B cell (primary cell): ENCODE measurements at regions of chr7 and their contacts with region 1.

Region 1: DNA sequence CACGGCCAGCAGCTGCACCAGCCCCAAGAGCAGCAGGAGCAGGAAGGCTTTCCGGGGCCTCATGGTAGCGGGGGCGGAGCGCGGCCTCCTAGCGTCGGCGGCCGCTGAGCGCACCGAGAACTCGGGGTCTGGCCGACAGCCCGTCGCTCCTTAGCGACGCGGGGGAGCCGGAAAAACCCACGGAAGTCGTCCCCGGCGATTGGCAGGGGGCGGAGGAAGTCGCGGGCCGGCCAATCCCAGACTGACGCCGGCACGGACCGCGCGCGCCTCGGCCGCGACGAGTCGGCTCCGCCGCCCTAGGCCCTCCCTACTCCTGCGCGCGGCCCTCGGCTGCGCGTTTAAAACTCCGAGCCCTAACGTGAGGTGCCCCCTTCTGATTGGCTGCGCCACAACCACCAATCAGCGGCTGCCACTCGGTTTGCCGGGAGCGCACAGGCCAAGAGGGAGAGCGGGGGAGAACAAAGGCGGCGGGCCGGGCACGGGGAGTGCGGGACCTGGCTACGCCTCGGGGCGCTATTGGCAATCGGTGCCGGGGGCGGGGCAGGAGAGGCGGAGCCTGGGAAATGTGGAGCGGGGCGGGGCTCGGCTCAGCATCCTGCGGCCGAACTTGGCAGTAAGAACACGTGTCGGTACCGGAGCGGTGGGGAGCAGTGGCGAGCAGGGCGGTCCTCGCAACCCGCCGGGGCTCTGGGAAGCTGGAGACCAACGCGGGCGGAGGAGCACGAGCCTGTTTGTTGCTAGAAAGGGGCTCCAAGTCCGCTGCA is at the start of gene PDIA4:
- DNase-seq: peak; percentile 99
- ATAC-seq: peak; percentile 86
- H3K4me3 ChIP-seq: peak within 1 kb of the TSS; percentile 51 to 77 (median 73)
- H3K4me3 Mint-ChIP-seq: peak within 1 kb of the TSS; percentile 93
- H3K27ac ChIP-seq: peak within 1 kb of the TSS; percentile 39 to 94
- H3K27ac Mint-ChIP-seq: peak within 1 kb of the TSS; percentile 91
- H3K4me1 ChIP-seq: peaks cover 19 to 21% of the 10 kb centered on the region in 2 donors
- H3K4me1 Mint-ChIP-seq: peaks cover 39% of the 10 kb centered on the region
- H3K27me3 ChIP-seq: no peaks in the 10 kb centered on the region
- H3K27me3 Mint-ChIP-seq: no peaks in the 10 kb centered on the region
- CTCF ChIP-seq: peak; percentile 47
- total RNA-seq, gene PDIA4: 34.7 and 36.5 TPM in 2 replicates

Region 2: GRCh38 chr7:148884299-148885022 is 144.1 kb before region 1 on chr7:
- CTCF ChIA-PET with region 1: no interaction called
- POLR2A ChIA-PET with region 1: no interaction called
- intact Hi-C with region 1: loop called (anchors 1 kb)
- DNase-seq: peak; percentile 96
- ATAC-seq: peak; percentile 93
- H3K4me3 ChIP-seq: peak overlapping the region; percentile 17 to 81 (median 64)
- H3K4me3 Mint-ChIP-seq: peak overlapping the region; percentile 91
- H3K27ac ChIP-seq: peak overlapping the region; percentile 75 to 99
- H3K27ac Mint-ChIP-seq: peak overlapping the region; percentile 93
- H3K4me1 ChIP-seq: peaks cover 11 to 16% of the 10 kb centered on the region in 2 donors
- H3K4me1 Mint-ChIP-seq: peaks cover 14% of the 10 kb centered on the region
- H3K27me3 ChIP-seq: no peaks in the 10 kb centered on the region
- H3K27me3 Mint-ChIP-seq: no peaks in the 10 kb centered on the region
- CTCF ChIP-seq: no peak

Region 3: GRCh38 chr7:149005241-149006050 is 23.1 kb before region 1 on chr7:
- CTCF ChIA-PET with region 1: interaction called, 58 read pairs
- POLR2A ChIA-PET with region 1: no interaction called
- intact Hi-C with region 1: loop called (anchors 1 kb)
- DNase-seq: peak; percentile 86
- ATAC-seq: peak; percentile 93
- H3K4me3 ChIP-seq: no peak overlapping the region
- H3K4me3 Mint-ChIP-seq: no peak overlapping the region
- H3K27ac ChIP-seq: no peak overlapping the region
- H3K27ac Mint-ChIP-seq: no peak overlapping the region
- H3K4me1 ChIP-seq: peaks cover 0 to 7% of the 10 kb centered on the region in 2 donors
- H3K4me1 Mint-ChIP-seq: peaks cover 4% of the 10 kb centered on the region
- H3K27me3 ChIP-seq: no peaks in the 10 kb centered on the region
- H3K27me3 Mint-ChIP-seq: no peaks in the 10 kb centered on the region
- CTCF ChIP-seq: peak; percentile 90

Region 4: DNA sequence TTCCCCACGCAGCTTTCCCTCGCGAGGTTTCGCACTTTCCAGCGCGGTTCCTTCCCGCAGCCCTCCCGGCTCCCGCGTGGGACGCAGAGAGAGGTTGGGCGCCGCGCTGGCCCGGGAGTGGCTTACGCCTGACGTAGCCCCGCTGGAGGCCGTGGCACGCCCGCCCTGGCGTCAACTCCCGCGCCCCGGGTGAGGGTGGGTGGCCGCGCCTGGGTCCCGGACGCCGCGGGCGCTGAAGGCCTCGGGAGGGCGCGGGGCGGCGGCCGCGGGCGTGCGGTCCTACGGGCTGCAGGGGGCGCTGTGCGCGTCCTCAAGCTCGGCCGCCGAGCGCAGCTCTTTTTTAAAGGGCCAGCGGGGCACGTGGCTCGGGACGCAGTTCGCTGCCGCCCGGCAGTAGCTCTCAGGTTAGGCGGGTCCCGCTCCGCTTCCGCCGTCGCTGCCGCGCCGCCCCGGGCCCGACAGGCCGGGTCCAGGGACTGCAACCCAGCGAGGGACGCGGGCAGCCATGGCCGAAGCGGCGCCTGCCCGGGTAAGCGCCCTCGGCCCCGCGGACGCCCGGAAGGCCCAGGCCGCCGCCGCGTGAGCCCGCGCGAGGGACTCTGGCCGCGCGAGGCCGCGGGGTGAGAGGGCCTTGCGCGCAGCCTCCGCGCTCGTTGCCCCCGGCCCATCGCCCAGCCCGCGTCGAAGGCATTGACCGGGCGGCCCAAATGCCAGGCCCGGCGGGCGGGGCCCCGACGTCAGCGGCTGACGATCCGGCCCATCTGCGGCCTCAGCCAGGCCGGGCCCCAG is 233.5 kb after region 1 on chr7 and contains the start of gene ZNF783:
- CTCF ChIA-PET with region 1: no interaction called
- POLR2A ChIA-PET with region 1: no interaction called
- intact Hi-C with region 1: loop called (anchors 10 kb)
- DNase-seq: peak; percentile 94
- ATAC-seq: peak; percentile 93
- H3K4me3 ChIP-seq: peak within 1 kb of the TSS in 4 of 5 experiments; percentile 64 to 75 (median 68)
- H3K4me3 Mint-ChIP-seq: peak within 1 kb of the TSS; percentile 94
- H3K27ac ChIP-seq: peak within 1 kb of the TSS; percentile 69 to 76
- H3K27ac Mint-ChIP-seq: peak within 1 kb of the TSS; percentile 92
- H3K4me1 ChIP-seq: peaks cover 13 to 17% of the 10 kb centered on the region in 2 donors
- H3K4me1 Mint-ChIP-seq: peaks cover 21% of the 10 kb centered on the region
- H3K27me3 ChIP-seq: no peaks in the 10 kb centered on the region
- H3K27me3 Mint-ChIP-seq: no peaks in the 10 kb centered on the region
- CTCF ChIP-seq: peak; percentile 86
- total RNA-seq, gene ZNF783: 43.8 and 44.8 TPM in 2 replicates

Region 5: GRCh38 chr7:149714050-149714909 is 685.8 kb after region 1 on chr7:
- CTCF ChIA-PET with region 1: no interaction called
- POLR2A ChIA-PET with region 1: no interaction called
- intact Hi-C with region 1: loop called (anchors 5 kb)
- DNase-seq: peak; percentile 94
- ATAC-seq: peak; percentile 93
- H3K4me3 ChIP-seq: peak overlapping the region in 4 of 5 experiments; percentile 62 to 83 (median 68)
- H3K4me3 Mint-ChIP-seq: peak overlapping the region; percentile 87
- H3K27ac ChIP-seq: no peak overlapping the region
- H3K27ac Mint-ChIP-seq: peak overlapping the region; percentile 78
- H3K4me1 ChIP-seq: peaks cover 10 to 21% of the 10 kb centered on the region in 2 donors
- H3K4me1 Mint-ChIP-seq: peaks cover 22% of the 10 kb centered on the region
- H3K27me3 ChIP-seq: no peaks in the 10 kb centered on the region
- H3K27me3 Mint-ChIP-seq: no peaks in the 10 kb centered on the region
- CTCF ChIP-seq: no peak